ENCODE measurements at regions of chr20 and their contacts with region 1.

Region 1: GRCh38 chr20:50120897-50121693 is 8.1 kb upstream of the UBE2V1 start:
- DNase-seq: peak; percentile 70
- ATAC-seq: peak; percentile 86
- H3K4me3 Mint-ChIP-seq: no peak overlapping the region
- H3K27ac Mint-ChIP-seq: peak overlapping the region; percentile 57; the same call in 1 of the 2 replicates
- H3K4me1 Mint-ChIP-seq: peaks cover 6% of the 10 kb centered on the region
- H3K27me3 Mint-ChIP-seq: 0 out of 2 replicates have a peak, but pooled peaks cover 2% of the 10 kb centered on the region
- CTCF ChIP-seq: peak; percentile 47

Region 2: GRCh38 chr20:49762940-49763766 is 357.9 kb before region 1 on chr20:
- CTCF ChIA-PET with region 1: no interaction called
- POLR2A ChIA-PET with region 1: no interaction called
- DNase-seq: no peak
- ATAC-seq: peak; percentile 23
- H3K4me3 Mint-ChIP-seq: no peak overlapping the region
- H3K27ac Mint-ChIP-seq: peak overlapping the region; percentile 70
- H3K4me1 Mint-ChIP-seq: peaks cover 63% of the 10 kb centered on the region
- H3K27me3 Mint-ChIP-seq: no peaks in the 10 kb centered on the region
- CTCF ChIP-seq: no peak

Region 3: DNA sequence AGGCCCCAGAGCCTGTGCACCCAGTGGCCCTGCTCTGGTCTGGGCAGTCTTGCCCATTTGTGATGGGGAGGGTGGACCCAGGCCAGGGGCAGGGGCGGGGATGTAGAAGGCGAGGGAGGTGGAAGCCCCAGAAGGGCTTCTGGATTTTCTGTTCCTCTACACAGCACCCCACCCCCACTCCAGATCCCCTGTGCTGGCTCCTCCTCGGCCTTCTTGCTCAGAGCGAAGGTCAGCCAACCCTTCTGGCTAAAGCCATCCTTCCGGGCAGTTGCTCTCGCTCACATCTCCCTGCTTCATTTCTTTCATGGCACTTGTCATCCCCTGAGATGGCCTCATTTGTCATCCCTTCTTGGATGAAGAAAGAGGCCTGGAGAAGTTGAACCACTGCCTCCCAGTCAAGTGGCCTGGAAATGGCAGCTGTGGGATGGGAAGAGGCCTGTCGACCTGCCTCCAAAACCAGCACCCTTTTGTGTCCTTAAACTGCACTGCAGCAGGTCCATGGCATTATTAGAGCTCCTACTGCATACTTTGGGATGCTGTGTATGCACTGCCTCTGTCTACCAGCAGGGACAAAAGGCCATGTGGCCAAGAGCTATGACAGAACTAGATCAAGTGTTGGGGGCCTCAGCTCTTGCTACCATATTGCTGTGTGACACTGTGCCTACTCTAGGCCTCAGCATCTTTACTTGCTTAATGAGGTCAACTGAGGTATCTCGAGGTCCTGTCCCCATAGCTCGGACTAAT is 12.6 kb after region 1 on chr20:
- CTCF ChIA-PET with region 1: interaction called, 23 read pairs
- POLR2A ChIA-PET with region 1: no interaction called
- DNase-seq: no peak
- ATAC-seq: peak; percentile 20; the same call in 1 of the 2 replicates
- H3K4me3 Mint-ChIP-seq: no peak overlapping the region
- H3K27ac Mint-ChIP-seq: no peak overlapping the region
- H3K4me1 Mint-ChIP-seq: peaks cover 4% of the 10 kb centered on the region; the same call in 1 of the 2 replicates
- H3K27me3 Mint-ChIP-seq: no peaks in the 10 kb centered on the region; the same call in 1 of the 2 replicates
- CTCF ChIP-seq: no peak

Region 4: GRCh38 chr20:50138479-50139393 is 17.6 kb after region 1 on chr20:
- CTCF ChIA-PET with region 1: interaction called, 23 read pairs
- POLR2A ChIA-PET with region 1: interaction called, 8 read pairs
- DNase-seq: peak; percentile 36
- ATAC-seq: peak; percentile 55
- H3K4me3 Mint-ChIP-seq: no peak overlapping the region
- H3K27ac Mint-ChIP-seq: peak overlapping the region; percentile 9; the same call in 1 of the 2 replicates
- H3K4me1 Mint-ChIP-seq: peaks cover 29% of the 10 kb centered on the region
- H3K27me3 Mint-ChIP-seq: no peaks in the 10 kb centered on the region
- CTCF ChIP-seq: no peak

Region 5: DNA sequence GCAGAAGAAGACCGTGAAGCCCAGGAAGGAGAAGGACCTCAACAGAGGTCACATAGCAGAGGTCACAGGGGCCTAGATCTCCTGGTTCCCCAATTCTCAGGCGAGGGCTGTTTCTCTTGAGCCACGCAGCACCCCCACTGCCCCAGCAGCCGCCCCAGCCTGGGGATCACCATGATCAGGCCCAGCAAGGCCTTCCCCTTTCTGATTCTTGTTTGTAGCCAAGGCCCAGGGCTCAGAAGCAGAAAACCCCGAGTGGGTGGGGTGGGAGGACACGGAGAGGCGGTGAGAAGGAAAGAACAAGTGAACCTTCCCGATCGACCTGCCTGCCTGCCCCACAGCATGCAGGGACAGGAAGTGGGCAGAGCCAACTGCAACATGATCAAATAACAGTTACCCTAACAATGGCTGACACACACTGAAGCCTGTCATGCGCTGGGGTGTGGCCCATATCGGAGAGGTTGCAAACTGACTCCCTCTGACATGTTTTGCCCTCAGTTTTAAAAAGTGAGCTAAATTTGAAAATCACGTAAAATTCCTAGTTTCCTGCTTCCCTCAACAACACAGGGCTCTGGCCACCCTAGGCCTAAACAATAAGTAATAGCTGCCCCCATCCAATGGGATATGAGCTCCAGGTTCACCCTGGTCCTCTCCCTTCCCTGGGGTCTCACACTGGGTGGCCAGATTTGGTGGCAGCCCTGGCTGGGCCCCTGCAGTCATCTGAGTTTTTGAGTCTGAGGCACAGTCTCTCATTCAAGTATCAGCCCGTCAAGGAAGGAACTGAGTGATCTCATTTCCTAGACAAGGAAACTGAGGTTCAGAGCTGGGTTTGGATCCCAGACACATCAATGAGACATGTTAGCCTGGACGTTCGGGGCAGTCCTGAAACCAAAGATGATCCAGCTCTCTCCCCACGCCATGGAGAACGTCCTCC is 25.9 kb after region 1 on chr20:
- CTCF ChIA-PET with region 1: interaction called, 89 read pairs
- POLR2A ChIA-PET with region 1: interaction called, 8 read pairs
- DNase-seq: no peak
- ATAC-seq: peak; percentile 62
- H3K4me3 Mint-ChIP-seq: no peak overlapping the region
- H3K27ac Mint-ChIP-seq: peak overlapping the region; percentile 93
- H3K4me1 Mint-ChIP-seq: peaks cover 68% of the 10 kb centered on the region
- H3K27me3 Mint-ChIP-seq: no peaks in the 10 kb centered on the region
- CTCF ChIP-seq: no peak

Region 6: DNA sequence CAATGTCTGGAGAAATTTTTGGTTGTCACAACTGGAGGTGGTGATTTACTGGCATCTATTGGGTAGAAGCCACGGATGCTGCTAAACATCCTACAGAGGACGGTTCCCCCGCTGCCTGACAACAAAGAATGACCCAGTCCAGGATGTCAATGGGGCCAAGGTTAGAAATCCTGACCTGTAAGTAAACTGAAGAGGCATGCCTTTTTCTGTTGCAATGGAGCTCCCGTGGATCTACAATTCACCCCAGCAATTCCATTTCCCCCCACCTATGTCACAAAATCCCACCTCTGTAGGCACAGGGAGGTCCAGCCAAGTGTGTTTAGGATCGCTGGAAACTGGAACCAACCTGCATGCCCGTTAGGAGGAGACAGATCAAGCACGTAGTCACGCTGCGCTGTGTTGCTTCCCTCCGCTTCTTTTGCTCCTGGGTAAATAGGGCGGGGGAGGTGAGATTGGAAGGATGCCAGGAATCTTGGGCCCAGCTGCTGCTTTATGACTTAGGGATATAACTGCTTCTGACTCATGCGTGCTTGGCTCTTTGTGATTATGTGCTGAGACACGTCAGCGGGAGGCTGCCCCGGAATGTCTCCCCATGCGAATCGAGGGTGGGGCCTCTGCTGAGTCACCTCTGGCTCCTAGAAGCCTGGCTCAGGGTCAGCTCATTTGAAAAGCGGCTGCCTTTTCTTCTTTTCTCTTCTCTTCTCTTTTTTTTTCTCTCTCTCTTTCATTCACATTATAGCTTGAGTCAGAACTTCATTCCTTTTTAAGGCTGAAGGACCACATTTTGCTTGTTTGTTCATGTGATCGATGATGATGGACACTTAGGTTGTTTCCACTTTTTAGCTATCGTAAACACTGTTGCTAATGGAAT is 44.8 kb after region 1 on chr20:
- CTCF ChIA-PET with region 1: interaction called, 146 read pairs
- POLR2A ChIA-PET with region 1: interaction called, 10 read pairs
- DNase-seq: peak; percentile 82
- ATAC-seq: peak; percentile 81
- H3K4me3 Mint-ChIP-seq: peak overlapping the region; percentile 65
- H3K27ac Mint-ChIP-seq: peak overlapping the region; percentile 80
- H3K4me1 Mint-ChIP-seq: peaks cover 25% of the 10 kb centered on the region
- H3K27me3 Mint-ChIP-seq: no peaks in the 10 kb centered on the region; the same call in 1 of the 2 replicates
- CTCF ChIP-seq: no peak